K562 (cell line): ENCODE measurements at regions of chr21 and their contacts with region 1.

Region 1: DNA sequence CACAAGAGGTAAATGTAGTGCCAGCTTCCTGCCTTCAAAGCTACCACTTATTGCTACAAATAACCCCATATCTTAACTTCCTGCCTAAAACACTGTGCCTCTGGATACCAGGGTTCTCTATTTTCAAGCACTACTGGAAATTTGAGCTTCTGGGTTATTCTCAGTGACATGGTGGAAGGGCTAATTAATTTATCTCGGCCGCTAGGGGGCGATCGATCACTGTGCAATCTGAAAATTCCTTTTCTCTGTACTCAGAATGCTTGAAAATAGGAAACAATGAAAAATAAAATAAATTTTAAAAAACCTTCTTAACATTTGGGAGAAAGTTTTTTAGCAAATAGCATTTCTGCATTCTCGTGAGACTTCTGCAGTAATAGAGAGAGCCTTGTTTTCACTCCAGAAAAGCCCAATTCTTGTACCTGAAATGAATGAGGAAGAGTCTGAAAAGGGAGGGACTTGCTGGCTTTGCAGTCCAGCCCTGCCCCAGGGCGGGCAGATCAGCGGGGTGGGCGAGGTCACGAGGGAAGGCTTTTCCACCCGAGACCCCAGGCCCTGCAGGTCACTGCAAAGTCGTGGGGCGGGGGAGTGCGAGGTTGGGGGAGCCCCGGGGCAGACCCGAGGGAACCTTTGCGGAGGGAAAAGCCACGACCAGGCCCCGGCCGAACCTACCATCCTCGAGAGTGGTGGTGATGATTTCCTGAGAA is 276.7 kb downstream of the PCP4 start:
- DNase-seq: peak; percentile 56 to 66 (median 59)
- ATAC-seq: peak; percentile 86
- H3K4me3 ChIP-seq: no peak overlapping the region
- H3K27ac ChIP-seq: no peak overlapping the region
- H3K4me1 ChIP-seq: no peaks in the 10 kb centered on the region
- H3K27me3 ChIP-seq: no peaks in the 10 kb centered on the region
- CTCF ChIP-seq: peak; percentile 45 to 84 (median 73); a peak in 5 of 6 replicates
- EP300 ChIP-seq: no peak
- POLR2A ChIP-seq: no peak
- RAD21 ChIP-seq: peak; percentile 65 to 80

Region 2: GRCh38 chr21:40385892-40386599 is 242.1 kb after region 1 on chr21:
- CTCF ChIA-PET with region 1: interaction called, 5 read pairs
- POLR2A ChIA-PET with region 1: no interaction called
- in situ Hi-C with region 1: no loop called
- intact Hi-C with region 1: loop called (anchors 1 kb)
- DNase-seq: peak; percentile 36 to 45 (median 39)
- ATAC-seq: peak; percentile 77
- H3K4me3 ChIP-seq: no peak overlapping the region
- H3K27ac ChIP-seq: no peak overlapping the region
- H3K4me1 ChIP-seq: no peaks in the 10 kb centered on the region
- H3K27me3 ChIP-seq: no peaks in the 10 kb centered on the region; a peak in 1 of 5 replicates
- CTCF ChIP-seq: peak; percentile 57 to 87 (median 68)
- EP300 ChIP-seq: no peak
- POLR2A ChIP-seq: no peak
- RAD21 ChIP-seq: peak; percentile 28 to 57; a peak in 2 of 4 replicates

Region 3: DNA sequence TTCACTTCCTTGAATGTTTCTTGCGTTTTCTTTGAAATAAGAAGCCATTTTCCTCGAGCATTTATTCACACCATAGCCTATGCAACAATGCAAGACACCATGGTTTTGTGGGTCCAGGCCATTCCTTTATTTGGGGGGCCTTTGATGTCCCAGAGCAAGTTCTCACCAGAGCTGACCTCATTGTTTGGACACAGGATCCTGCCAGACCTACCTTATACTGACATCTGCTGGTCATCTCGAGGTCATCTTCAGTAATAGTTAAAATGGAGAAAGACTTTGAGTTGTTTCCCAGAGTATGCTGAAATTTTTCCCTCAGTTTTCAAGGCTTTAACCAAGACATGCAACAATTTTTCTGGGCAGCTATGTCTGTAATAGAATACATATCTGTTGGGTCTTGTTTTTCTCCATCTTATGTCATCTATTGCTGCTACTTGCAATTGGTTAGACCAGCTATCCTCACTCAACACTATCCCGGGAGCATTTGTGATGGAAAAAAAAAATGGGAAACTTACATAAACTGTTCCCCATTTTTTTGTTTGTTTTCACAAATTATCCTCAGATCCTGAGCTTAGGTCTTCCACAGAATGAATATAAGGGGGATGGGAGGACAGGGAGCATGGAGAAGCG is 990.0 kb after region 1 on chr21:
- CTCF ChIA-PET with region 1: interaction called, 3 read pairs
- POLR2A ChIA-PET with region 1: interaction called, 3 read pairs
- in situ Hi-C with region 1: no loop called
- intact Hi-C with region 1: loop called (anchors 2 kb)
- DNase-seq: peak; percentile 49 to 66 (median 61)
- ATAC-seq: peak; percentile 88
- H3K4me3 ChIP-seq: no peak overlapping the region
- H3K27ac ChIP-seq: no peak overlapping the region
- H3K4me1 ChIP-seq: no peaks in the 10 kb centered on the region
- H3K27me3 ChIP-seq: peaks cover 0 to 1% of the 10 kb centered on the region in 2 experiments; a peak in 1 of 5 replicates
- CTCF ChIP-seq: peak; percentile 39 to 68 (median 61); a peak in 5 of 6 replicates
- EP300 ChIP-seq: no peak
- POLR2A ChIP-seq: no peak
- RAD21 ChIP-seq: peak in 1 of 2 experiments; percentile 44; a peak in 3 of 4 replicates